IMR-90 (cell line): ENCODE measurements at regions of chr15 and their contacts with region 1.

Region 1: GRCh38 chr15:49046220-49047102 is at the start of gene SECISBP2L:
- DNase-seq: peak; percentile 92
- ATAC-seq: peak; percentile 97
- H3K4me3 ChIP-seq: peak within 1 kb of the TSS; percentile 97
- H3K27ac ChIP-seq: peak within 1 kb of the TSS; percentile 77
- H3K4me1 ChIP-seq: no peaks in the 10 kb centered on the region
- H3K27me3 ChIP-seq: no peaks in the 10 kb centered on the region
- CTCF ChIP-seq: peak; percentile 36
- POLR2A ChIP-seq: peak; percentile 74
- RAD21 ChIP-seq: peak; percentile 23; the same call in 1 of the 2 replicates
- total RNA-seq, gene SECISBP2L: 34.1 and 45.0 TPM in 2 replicates

Region 2: GRCh38 chr15:48800811-48801455 is 245.5 kb before region 1 on chr15:
- CTCF ChIA-PET with region 1: no interaction called
- POLR2A ChIA-PET with region 1: no interaction called
- dilution Hi-C with region 1: no loop called
- in situ Hi-C with region 1: no loop called
- intact Hi-C with region 1: no loop called
- DNase-seq: peak; percentile 43
- ATAC-seq: no peak
- H3K4me3 ChIP-seq: no peak overlapping the region
- H3K27ac ChIP-seq: no peak overlapping the region
- H3K4me1 ChIP-seq: peaks cover 5% of the 10 kb centered on the region
- H3K27me3 ChIP-seq: no peaks in the 10 kb centered on the region
- CTCF ChIP-seq: peak; percentile 51
- POLR2A ChIP-seq: no peak
- RAD21 ChIP-seq: peak; percentile 48; the same call in 1 of the 2 replicates

Region 3: GRCh38 chr15:48868536-48868935 is 177.9 kb before region 1 on chr15:
- CTCF ChIA-PET with region 1: no interaction called
- POLR2A ChIA-PET with region 1: no interaction called
- dilution Hi-C with region 1: no loop called
- in situ Hi-C with region 1: no loop called
- intact Hi-C with region 1: loop called (anchors 5 kb)
- DNase-seq: peak; percentile 87
- ATAC-seq: peak; percentile 52
- H3K4me3 ChIP-seq: no peak overlapping the region
- H3K27ac ChIP-seq: peak overlapping the region; percentile 97
- H3K4me1 ChIP-seq: peaks cover 21% of the 10 kb centered on the region
- H3K27me3 ChIP-seq: no peaks in the 10 kb centered on the region
- CTCF ChIP-seq: no peak
- POLR2A ChIP-seq: no peak
- RAD21 ChIP-seq: no peak

Region 4: DNA sequence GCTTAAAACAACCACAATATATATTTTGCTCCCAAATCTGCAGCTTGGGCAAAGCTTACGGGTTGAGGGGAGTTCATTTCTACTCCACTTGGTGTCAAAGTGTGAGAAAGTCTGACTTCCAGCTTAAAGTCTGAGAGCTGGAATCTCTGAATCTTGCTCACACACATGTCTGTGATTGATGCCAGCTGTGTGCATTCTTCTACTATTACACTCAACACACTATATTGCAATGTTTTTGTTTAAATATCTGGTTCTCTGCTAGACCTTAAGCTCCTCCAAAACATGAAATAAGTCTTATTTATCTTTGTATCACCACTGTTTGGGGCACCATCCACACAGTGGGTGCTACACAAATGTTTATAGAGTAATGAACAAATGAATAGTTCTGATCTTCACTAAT is 36.5 kb after region 1 on chr15:
- CTCF ChIA-PET with region 1: no interaction called
- POLR2A ChIA-PET with region 1: no interaction called
- dilution Hi-C with region 1: no loop called
- in situ Hi-C with region 1: no loop called
- intact Hi-C with region 1: loop called (anchors 5 kb)
- DNase-seq: peak; percentile 93
- ATAC-seq: peak; percentile 87
- H3K4me3 ChIP-seq: no peak overlapping the region
- H3K27ac ChIP-seq: peak overlapping the region; percentile 36; the same call in 1 of the 2 replicates
- H3K4me1 ChIP-seq: peaks cover 19% of the 10 kb centered on the region
- H3K27me3 ChIP-seq: no peaks in the 10 kb centered on the region
- CTCF ChIP-seq: no peak
- POLR2A ChIP-seq: no peak
- RAD21 ChIP-seq: no peak

Region 5: DNA sequence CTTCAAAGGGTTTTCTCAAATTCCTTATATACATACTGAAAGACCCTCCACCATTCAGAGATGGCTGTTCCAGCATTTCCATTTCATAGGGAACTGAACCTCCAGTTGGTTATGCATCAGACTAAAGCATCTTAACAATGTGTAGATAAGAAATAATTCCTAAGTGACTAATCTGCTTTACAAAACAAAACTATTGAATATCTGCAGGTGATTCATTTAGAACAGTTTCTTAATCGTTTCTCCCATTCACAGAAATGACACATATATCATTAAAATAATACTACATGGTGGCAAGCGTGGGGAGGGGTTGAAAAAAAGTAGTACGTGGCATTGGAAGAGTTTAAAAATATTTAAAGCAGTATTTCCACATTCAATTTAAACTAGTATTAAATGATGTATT is 89.4 kb after region 1 on chr15:
- CTCF ChIA-PET with region 1: no interaction called
- POLR2A ChIA-PET with region 1: no interaction called
- dilution Hi-C with region 1: no loop called
- in situ Hi-C with region 1: no loop called
- intact Hi-C with region 1: loop called (anchors 5 kb)
- DNase-seq: peak; percentile 92
- ATAC-seq: peak; percentile 86
- H3K4me3 ChIP-seq: no peak overlapping the region
- H3K27ac ChIP-seq: no peak overlapping the region; the same call in 1 of the 2 replicates
- H3K4me1 ChIP-seq: peaks cover 11% of the 10 kb centered on the region
- H3K27me3 ChIP-seq: no peaks in the 10 kb centered on the region
- CTCF ChIP-seq: no peak
- POLR2A ChIP-seq: no peak
- RAD21 ChIP-seq: no peak

Region 6: GRCh38 chr15:49225613-49226281 is 179.3 kb after region 1 on chr15:
- CTCF ChIA-PET with region 1: no interaction called
- POLR2A ChIA-PET with region 1: no interaction called
- dilution Hi-C with region 1: no loop called
- in situ Hi-C with region 1: no loop called
- intact Hi-C with region 1: loop called (anchors 5 kb)
- DNase-seq: peak; percentile 60
- ATAC-seq: peak; percentile 83
- H3K4me3 ChIP-seq: no peak overlapping the region
- H3K27ac ChIP-seq: no peak overlapping the region
- H3K4me1 ChIP-seq: no peaks in the 10 kb centered on the region
- H3K27me3 ChIP-seq: no peaks in the 10 kb centered on the region
- CTCF ChIP-seq: peak; percentile 37
- POLR2A ChIP-seq: no peak
- RAD21 ChIP-seq: peak; percentile 43